CD4-positive, alpha-beta memory T cell (primary cell): ENCODE measurements at regions of chr12 and their contacts with region 1.

Region 1: GRCh38 chr12:53190108-53190729 is 9.5 kb upstream of the CSAD start:
- DNase-seq: peak; percentile 46 to 64 (median 52)
- H3K4me3 ChIP-seq: no peak overlapping the region
- H3K4me3 Mint-ChIP-seq: no peak overlapping the region
- H3K27ac ChIP-seq: no peak overlapping the region
- H3K27ac Mint-ChIP-seq: peak overlapping the region in 6 of 7 donors; percentile 51 to 79 (median 66)
- H3K4me1 ChIP-seq: peaks cover 13% of the 10 kb centered on the region
- H3K4me1 Mint-ChIP-seq: peaks cover 8 to 22% (median 11%) of the 10 kb centered on the region in 4 donors
- H3K27me3 ChIP-seq: no peaks in the 10 kb centered on the region
- H3K27me3 Mint-ChIP-seq: no peaks in the 10 kb centered on the region

Region 2: DNA sequence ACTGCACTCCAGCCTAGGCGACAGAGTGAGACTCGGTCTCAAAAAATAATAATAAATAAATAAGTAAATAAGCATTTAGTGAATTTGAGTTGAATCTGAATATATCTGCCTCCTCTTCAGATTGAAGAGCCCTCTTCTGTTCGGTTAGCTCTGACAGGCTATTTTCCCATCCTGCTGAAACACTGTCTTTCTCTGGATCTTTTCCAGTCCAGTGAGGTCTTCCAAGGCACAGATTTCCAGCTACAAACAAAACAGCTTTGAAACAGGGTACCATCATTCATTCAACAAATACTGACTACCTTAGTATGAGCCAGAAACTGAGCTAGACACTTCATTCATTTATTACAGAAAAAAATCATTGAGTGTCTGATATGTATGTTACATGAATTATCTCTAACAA is 103.9 kb before region 1 on chr12:
- CTCF ChIA-PET with region 1: no interaction called
- POLR2A ChIA-PET with region 1: no interaction called
- intact Hi-C with region 1: no loop called
- DNase-seq: no peak
- H3K4me3 ChIP-seq: no peak overlapping the region
- H3K4me3 Mint-ChIP-seq: no peak overlapping the region
- H3K27ac ChIP-seq: no peak overlapping the region
- H3K27ac Mint-ChIP-seq: no peak overlapping the region
- H3K4me1 ChIP-seq: no peaks in the 10 kb centered on the region
- H3K4me1 Mint-ChIP-seq: no peaks in the 10 kb centered on the region
- H3K27me3 ChIP-seq: no peaks in the 10 kb centered on the region
- H3K27me3 Mint-ChIP-seq: peaks cover 2 to 18% of the 10 kb centered on the region in 2 donors

Region 3: DNA sequence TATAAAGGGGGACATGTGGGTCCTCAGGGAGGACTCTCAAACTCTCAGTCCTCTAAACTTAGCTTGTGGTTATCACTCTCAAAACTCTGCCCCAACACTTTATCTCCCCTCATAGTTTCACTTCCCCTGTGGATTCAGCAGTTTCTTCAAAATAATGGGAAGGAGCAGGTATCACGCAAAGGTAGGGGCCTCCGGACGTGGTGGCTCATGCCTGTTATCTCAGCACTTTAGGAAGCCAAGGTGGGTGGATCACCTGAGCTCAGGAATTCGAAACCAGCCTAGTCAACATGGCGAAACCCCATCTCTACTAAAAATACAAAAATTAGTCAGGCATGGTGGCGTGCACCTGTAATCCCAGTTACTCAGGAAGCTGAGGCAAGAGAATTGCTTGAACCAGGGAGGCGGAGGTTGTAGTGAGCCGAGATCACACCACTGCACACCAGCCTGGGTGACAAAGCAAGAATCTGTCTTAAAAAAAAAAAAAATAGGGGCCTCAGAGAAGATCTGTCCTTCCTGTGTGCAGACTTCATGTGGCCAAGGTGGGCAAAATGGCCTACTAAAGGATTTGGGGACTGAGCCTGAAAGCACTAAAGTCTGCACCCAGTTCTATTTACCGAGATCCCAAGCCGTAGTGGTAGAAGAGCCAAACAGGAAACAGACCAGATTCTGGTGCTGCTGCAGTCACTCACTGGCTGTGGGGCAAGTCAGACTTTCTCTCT is 10.4 kb after region 1 on chr12:
- CTCF ChIA-PET with region 1: interaction called, 16 read pairs
- POLR2A ChIA-PET with region 1: interaction called, 463 read pairs
- intact Hi-C with region 1: no loop called
- DNase-seq: no peak
- H3K4me3 ChIP-seq: peak overlapping the region; percentile 12 to 29
- H3K4me3 Mint-ChIP-seq: peak overlapping the region; percentile 66 to 89 (median 73)
- H3K27ac ChIP-seq: peak overlapping the region; percentile 41
- H3K27ac Mint-ChIP-seq: peak overlapping the region; percentile 73 to 95 (median 86)
- H3K4me1 ChIP-seq: peaks cover 95% of the 10 kb centered on the region
- H3K4me1 Mint-ChIP-seq: peaks cover 48 to 84% (median 66%) of the 10 kb centered on the region in 4 donors
- H3K27me3 ChIP-seq: no peaks in the 10 kb centered on the region
- H3K27me3 Mint-ChIP-seq: no peaks in the 10 kb centered on the region